ENCODE measurements at regions of chr10 and their contacts with region 1.

Region 1: GRCh38 chr10:28781296-28781695 is 104.0 kb downstream of the BAMBI start:
- DNase-seq: no peak
- H3K4me3 ChIP-seq: no peak overlapping the region
- H3K4me3 Mint-ChIP-seq: no peak overlapping the region
- H3K27ac Mint-ChIP-seq: no peak overlapping the region
- H3K4me1 ChIP-seq: peaks cover 28% of the 10 kb centered on the region
- H3K4me1 Mint-ChIP-seq: peaks cover 31% of the 10 kb centered on the region
- H3K27me3 ChIP-seq: no peaks in the 10 kb centered on the region
- H3K27me3 Mint-ChIP-seq: no peaks in the 10 kb centered on the region
- CTCF ChIP-seq: no peak

Region 2: DNA sequence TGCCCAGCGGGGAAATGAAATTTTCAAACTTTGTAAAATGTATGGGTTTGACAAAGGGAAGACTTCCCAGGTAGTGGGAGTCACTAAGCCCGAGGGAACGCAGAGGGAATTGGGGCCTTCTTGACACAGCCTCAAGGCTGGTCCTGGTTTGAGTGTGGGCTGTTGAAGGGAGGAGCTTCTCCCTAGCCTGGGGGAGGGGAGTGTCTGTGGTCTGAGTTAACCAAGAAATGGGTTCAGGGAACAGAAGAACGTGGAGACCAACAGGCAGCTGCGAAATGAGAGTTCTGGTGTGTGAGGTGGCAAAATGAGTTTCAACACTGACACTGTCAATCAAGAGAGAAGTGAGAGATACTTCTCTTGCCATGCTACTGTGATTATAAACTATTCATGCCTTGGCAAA is 136.6 kb before region 1 on chr10:
- CTCF ChIA-PET with region 1: no interaction called
- POLR2A ChIA-PET with region 1: no interaction called
- intact Hi-C with region 1: no loop called
- DNase-seq: no peak
- H3K4me3 ChIP-seq: no peak overlapping the region
- H3K4me3 Mint-ChIP-seq: no peak overlapping the region
- H3K27ac Mint-ChIP-seq: no peak overlapping the region
- H3K4me1 ChIP-seq: no peaks in the 10 kb centered on the region
- H3K4me1 Mint-ChIP-seq: no peaks in the 10 kb centered on the region
- H3K27me3 ChIP-seq: no peaks in the 10 kb centered on the region
- H3K27me3 Mint-ChIP-seq: no peaks in the 10 kb centered on the region
- CTCF ChIP-seq: no peak

Region 3: DNA sequence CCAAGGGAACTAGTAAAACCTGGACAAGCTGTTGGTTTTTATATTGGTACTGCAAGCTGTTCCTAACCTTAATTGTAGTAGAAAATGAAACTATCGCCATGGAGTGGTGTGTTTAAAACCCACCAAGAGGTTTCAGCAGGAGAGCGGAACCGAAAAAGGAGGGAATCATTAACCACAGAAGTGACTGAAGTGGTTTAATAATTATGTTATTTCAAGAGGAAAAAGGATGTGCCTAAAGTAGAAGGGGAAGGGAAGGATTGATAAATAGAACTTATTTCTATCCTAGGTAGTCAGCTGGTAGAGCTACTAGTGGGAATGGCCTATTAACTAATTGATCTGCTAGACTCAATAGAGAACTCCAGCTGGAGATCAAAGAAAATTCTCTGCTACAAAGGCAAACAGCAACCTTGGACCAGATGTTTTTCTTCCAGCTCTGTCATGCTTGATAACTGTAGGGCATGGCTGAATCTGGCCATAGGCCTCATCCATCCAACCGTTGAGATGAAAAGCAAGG is 12.1 kb before region 1 on chr10:
- CTCF ChIA-PET with region 1: no interaction called
- POLR2A ChIA-PET with region 1: no interaction called
- intact Hi-C with region 1: no loop called
- DNase-seq: no peak
- H3K4me3 ChIP-seq: no peak overlapping the region
- H3K4me3 Mint-ChIP-seq: no peak overlapping the region
- H3K27ac Mint-ChIP-seq: no peak overlapping the region
- H3K4me1 ChIP-seq: peaks cover 23% of the 10 kb centered on the region
- H3K4me1 Mint-ChIP-seq: peaks cover 21% of the 10 kb centered on the region
- H3K27me3 ChIP-seq: no peaks in the 10 kb centered on the region
- H3K27me3 Mint-ChIP-seq: no peaks in the 10 kb centered on the region
- CTCF ChIP-seq: no peak

Region 4: DNA sequence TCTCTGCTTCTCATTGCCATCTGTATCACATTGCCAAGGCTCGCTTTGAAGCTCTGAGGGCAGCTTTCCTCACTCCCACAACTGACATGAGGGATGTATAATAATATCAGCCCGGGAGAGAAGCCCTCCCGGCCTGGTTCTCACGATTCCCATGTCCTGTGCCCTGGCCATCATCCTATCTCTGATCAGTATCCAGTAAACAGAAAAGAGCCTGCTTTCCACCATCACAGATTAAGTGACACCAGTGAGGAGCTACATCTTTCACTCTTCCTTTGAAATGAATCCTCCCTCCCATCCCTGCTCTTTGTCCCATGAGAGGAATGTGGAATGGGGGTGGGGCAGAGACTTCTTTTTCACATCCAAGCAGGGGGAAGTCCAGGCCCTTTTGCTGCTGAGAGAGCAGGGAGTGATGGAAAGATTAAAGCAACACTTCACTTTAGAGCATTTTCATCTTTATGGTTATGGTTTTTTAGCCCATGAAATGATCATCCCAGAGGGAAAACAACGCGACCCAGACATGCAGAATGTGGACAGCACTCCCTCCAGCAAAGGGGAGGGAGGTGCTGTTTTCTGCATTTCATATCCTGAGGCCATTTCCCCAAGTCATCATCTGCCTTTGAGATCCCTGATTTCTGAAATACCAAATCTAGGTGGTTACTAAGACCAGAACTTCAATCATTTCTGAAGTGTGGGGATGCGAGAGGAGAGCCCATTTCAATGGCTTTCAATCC is 422.9 kb after region 1 on chr10:
- CTCF ChIA-PET with region 1: no interaction called
- POLR2A ChIA-PET with region 1: interaction called, 12 read pairs
- intact Hi-C with region 1: no loop called
- DNase-seq: peak; percentile 67 to 78
- H3K4me3 ChIP-seq: no peak overlapping the region
- H3K4me3 Mint-ChIP-seq: no peak overlapping the region
- H3K27ac Mint-ChIP-seq: peak overlapping the region; percentile 54
- H3K4me1 ChIP-seq: peaks cover 14% of the 10 kb centered on the region
- H3K4me1 Mint-ChIP-seq: peaks cover 16% of the 10 kb centered on the region
- H3K27me3 ChIP-seq: no peaks in the 10 kb centered on the region
- H3K27me3 Mint-ChIP-seq: no peaks in the 10 kb centered on the region
- CTCF ChIP-seq: no peak